ENCODE measurements at regions of chr2 and their contacts with region 1.

Region 1: GRCh38 chr2:179020156-179020750 is 29.7 kb downstream of the CCDC141 start:
- DNase-seq: peak; percentile 82
- H3K4me3 Mint-ChIP-seq: no peak overlapping the region
- H3K27ac Mint-ChIP-seq: no peak overlapping the region
- H3K4me1 Mint-ChIP-seq: peaks cover 26% of the 10 kb centered on the region
- H3K27me3 Mint-ChIP-seq: no peaks in the 10 kb centered on the region

Region 2: DNA sequence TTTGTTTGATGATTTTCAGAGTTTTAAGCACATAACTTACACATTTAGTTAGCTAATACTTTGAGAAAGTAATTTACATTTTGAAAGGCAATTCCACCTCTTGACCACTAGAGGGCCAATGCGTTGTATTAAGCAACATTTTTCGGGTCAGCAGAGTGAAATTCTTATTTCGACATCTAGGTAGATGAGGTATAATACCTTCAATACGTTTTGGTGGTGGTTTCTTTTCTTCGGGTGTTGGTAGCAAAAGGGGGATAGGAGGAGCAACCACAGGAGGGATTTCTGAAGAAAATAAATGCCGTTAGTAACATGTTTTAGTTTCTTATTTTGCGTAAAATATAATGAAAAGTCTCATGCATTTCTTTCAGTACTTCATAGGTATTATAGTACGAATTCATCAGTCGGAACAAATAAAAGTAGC is 319.3 kb before region 1 on chr2:
- CTCF ChIA-PET with region 1: no interaction called
- intact Hi-C with region 1: loop called (anchors 5 kb)
- DNase-seq: no peak
- H3K4me3 Mint-ChIP-seq: no peak overlapping the region
- H3K27ac Mint-ChIP-seq: no peak overlapping the region
- H3K4me1 Mint-ChIP-seq: peaks cover 2% of the 10 kb centered on the region
- H3K27me3 Mint-ChIP-seq: no peaks in the 10 kb centered on the region

Region 3: GRCh38 chr2:178796079-178796677 is 224.1 kb before region 1 on chr2:
- CTCF ChIA-PET with region 1: interaction called, 6 read pairs
- intact Hi-C with region 1: loop called (anchors 1 kb)
- DNase-seq: no peak
- H3K4me3 Mint-ChIP-seq: no peak overlapping the region
- H3K27ac Mint-ChIP-seq: no peak overlapping the region
- H3K4me1 Mint-ChIP-seq: no peaks in the 10 kb centered on the region
- H3K27me3 Mint-ChIP-seq: no peaks in the 10 kb centered on the region

Region 4: DNA sequence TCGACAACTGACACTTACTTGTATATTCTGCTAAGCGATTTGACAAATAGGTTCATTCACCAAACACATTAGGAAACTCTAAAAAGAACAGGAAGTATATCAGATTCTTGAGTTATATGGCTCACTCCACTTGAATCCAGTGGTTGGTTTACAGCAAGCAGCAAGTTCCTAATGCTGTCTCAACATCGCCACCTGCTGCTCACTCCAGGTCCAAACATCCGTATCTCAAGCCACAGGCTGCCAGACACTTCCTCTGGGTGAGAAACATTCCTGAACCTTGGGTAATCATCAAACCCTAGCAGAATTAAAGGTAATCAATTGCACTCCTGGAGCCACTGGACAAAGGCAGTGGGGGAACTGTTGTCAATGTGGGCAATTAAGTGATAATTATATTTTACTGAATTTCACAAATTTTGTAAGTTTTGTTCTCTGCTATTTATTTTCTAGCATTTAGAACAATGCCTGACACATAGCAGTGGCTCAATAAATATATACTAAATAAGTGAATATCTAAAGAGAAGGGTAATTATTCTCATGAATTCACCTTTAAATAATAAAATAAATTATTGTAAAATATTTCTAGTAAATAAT is 105.9 kb before region 1 on chr2:
- CTCF ChIA-PET with region 1: interaction called, 17 read pairs
- intact Hi-C with region 1: loop called (anchors 1 kb)
- DNase-seq: peak; percentile 89
- H3K4me3 Mint-ChIP-seq: no peak overlapping the region
- H3K27ac Mint-ChIP-seq: no peak overlapping the region
- H3K4me1 Mint-ChIP-seq: peaks cover 7% of the 10 kb centered on the region
- H3K27me3 Mint-ChIP-seq: no peaks in the 10 kb centered on the region

Region 5: GRCh38 chr2:178998539-178998938 is 21.7 kb before region 1 on chr2:
- CTCF ChIA-PET with region 1: interaction called, 10 read pairs
- intact Hi-C with region 1: no loop called
- DNase-seq: no peak
- H3K4me3 Mint-ChIP-seq: no peak overlapping the region
- H3K27ac Mint-ChIP-seq: no peak overlapping the region
- H3K4me1 Mint-ChIP-seq: peaks cover 12% of the 10 kb centered on the region
- H3K27me3 Mint-ChIP-seq: no peaks in the 10 kb centered on the region

Region 6: GRCh38 chr2:179129574-179130238 is 109.5 kb after region 1 on chr2:
- CTCF ChIA-PET with region 1: interaction called, 24 read pairs
- intact Hi-C with region 1: loop called (anchors 1 kb)
- DNase-seq: peak; percentile 35
- H3K4me3 Mint-ChIP-seq: no peak overlapping the region
- H3K27ac Mint-ChIP-seq: no peak overlapping the region
- H3K4me1 Mint-ChIP-seq: no peaks in the 10 kb centered on the region
- H3K27me3 Mint-ChIP-seq: no peaks in the 10 kb centered on the region

Region 7: DNA sequence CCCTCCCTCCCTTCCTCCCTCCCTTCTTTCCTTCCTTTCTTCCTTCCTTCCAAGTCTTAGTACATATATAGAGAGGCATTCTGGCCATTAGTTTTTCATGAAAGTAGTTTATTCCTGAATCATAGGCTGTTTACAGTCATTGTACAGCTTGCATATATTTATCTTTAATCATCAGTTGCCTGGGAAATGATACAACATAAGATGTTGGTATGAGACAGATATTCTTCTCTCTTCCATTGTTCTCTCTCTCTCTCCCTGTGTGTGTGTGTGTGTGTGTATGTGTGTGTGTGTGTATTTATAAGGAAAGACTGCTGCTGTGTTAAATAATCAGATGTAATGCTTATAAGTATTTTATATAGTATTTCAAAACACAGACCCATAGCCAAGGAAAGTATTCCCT is 1670.4 kb after region 1 on chr2:
- CTCF ChIA-PET with region 1: no interaction called
- intact Hi-C with region 1: no loop called
- DNase-seq: no peak
- H3K4me3 Mint-ChIP-seq: no peak overlapping the region
- H3K27ac Mint-ChIP-seq: no peak overlapping the region
- H3K4me1 Mint-ChIP-seq: no peaks in the 10 kb centered on the region
- H3K27me3 Mint-ChIP-seq: peaks cover 3% of the 10 kb centered on the region

Measured in activated naive CD4-positive, alpha-beta T cell treated with anti-CD3 and anti-CD28 coated beads for 36 hours (primary cell).